PC-3 (cell line): ENCODE measurements at regions of chrX and their contacts with region 1.

Region 1: GRCh38 chrX:107537815-107538214 is 88.4 kb downstream of the FRMPD3 start:
- DNase-seq: peak; percentile 68
- ATAC-seq: peak; percentile 76
- H3K4me3 ChIP-seq: no peak overlapping the region
- H3K27ac ChIP-seq: no peak overlapping the region
- H3K4me1 ChIP-seq: no peaks in the 10 kb centered on the region
- H3K27me3 ChIP-seq: no peaks in the 10 kb centered on the region
- CTCF ChIP-seq: peak; percentile 77

Region 2: GRCh38 chrX:107025545-107025944 is 512.3 kb before region 1 on chrX:
- CTCF ChIA-PET with region 1: interaction called, 12 read pairs
- POLR2A ChIA-PET with region 1: no interaction called
- intact Hi-C with region 1: no loop called
- DNase-seq: peak; percentile 56
- ATAC-seq: peak; percentile 69
- H3K4me3 ChIP-seq: no peak overlapping the region
- H3K27ac ChIP-seq: no peak overlapping the region
- H3K4me1 ChIP-seq: no peaks in the 10 kb centered on the region
- H3K27me3 ChIP-seq: no peaks in the 10 kb centered on the region
- CTCF ChIP-seq: peak; percentile 81

Region 3: DNA sequence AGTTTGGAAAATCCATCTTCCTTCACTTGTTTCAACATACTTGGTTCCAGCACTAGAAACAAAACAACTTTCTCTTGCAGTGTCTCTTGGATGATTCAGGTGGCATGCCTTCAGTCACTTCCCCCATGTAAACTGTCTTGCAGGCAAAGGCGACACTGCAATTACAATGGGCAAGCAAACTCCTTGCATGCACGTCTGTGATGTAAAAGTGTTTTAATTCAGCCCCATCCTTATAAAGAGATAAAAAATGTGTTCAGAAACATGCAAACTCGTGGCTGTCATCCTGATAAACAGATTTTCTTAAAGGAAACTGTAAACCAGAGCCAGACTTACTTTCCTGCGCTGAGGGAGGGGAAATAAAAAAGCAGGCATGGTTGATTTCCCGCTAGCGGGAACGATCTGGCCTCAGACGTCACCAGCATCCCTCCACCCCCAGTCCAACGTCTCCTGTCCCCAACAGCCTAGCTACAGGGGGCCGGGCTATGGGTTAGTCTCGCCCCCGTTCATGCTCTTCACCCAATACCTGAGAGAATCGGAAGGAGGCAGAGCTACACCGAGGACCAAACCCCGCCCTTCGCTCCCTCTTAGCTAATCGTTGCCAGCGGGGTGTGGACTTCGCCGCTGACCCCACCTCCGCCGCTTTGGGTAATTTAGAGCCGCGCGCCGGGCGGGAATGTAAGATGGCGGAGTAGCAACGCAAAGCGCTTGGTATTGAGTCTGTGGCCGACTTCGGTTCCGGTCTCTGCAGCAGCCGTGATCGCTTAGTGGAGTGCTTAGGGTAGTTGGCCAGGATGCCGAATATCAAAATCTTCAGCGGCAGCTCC is 90.2 kb after region 1 on chrX and contains the start of gene PRPS1:
- CTCF ChIA-PET with region 1: interaction called, 5 read pairs
- POLR2A ChIA-PET with region 1: interaction called, 4 read pairs
- intact Hi-C with region 1: loop called (anchors 1 kb)
- DNase-seq: peak; percentile 96
- ATAC-seq: peak; percentile 94
- H3K4me3 ChIP-seq: peak within 1 kb of the TSS; percentile 89
- H3K27ac ChIP-seq: peak within 1 kb of the TSS; percentile 82
- H3K4me1 ChIP-seq: peaks cover 37% of the 10 kb centered on the region
- H3K27me3 ChIP-seq: no peaks in the 10 kb centered on the region
- CTCF ChIP-seq: no peak
- total RNA-seq, gene PRPS1: 57.0 and 70.8 TPM in 2 replicates

Region 4: GRCh38 chrX:107669261-107669660 is 131.4 kb after region 1 on chrX:
- CTCF ChIA-PET with region 1: no interaction called
- POLR2A ChIA-PET with region 1: no interaction called
- intact Hi-C with region 1: no loop called
- DNase-seq: no peak
- ATAC-seq: no peak
- H3K4me3 ChIP-seq: no peak overlapping the region
- H3K27ac ChIP-seq: no peak overlapping the region
- H3K4me1 ChIP-seq: peaks cover 13% of the 10 kb centered on the region
- H3K27me3 ChIP-seq: no peaks in the 10 kb centered on the region
- CTCF ChIP-seq: no peak

Region 5: DNA sequence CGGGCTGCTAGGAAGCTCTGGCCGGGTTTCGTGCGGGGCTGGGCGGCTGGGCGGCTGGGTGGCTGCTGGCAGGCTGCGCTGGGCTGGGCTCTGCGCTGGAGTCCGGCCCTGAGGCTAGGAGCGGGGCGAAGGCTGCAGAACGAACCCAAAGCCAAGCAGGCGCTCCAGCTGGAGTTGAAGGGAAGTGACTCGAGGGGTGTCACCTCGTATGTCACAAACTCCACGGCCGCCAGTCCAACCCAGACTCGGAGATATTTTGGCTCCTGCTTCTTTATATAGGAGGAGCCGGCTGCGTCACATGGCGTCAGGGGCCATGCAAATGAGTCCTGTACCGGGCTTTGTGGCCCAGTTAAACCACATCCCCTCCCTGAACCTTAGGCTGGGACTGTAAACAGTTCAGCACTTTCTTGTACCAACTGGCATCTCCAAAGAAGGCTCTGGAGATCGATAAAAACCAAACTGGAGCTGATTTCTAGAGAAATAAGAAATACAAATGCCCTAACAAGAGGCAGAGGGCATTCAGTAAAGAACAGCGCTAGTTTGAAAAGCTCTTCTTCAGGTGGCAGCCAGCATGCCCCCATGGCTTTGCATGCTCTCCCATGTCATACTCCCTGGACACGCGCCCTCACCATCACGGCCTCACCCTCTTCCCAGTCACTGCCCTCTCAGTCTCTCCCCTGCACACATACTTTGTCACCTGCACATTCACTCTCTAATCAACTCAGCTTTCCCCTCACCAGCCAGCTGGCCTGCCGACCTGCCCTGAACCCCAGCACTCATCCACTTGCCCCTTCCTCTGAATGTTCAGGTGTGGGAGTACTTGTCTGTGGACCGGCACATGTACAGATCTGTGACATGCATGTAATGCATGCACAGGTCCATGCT is 179.2 kb after region 1 on chrX:
- CTCF ChIA-PET with region 1: no interaction called
- POLR2A ChIA-PET with region 1: no interaction called
- intact Hi-C with region 1: loop called (anchors 2 kb)
- DNase-seq: peak; percentile 69
- ATAC-seq: peak; percentile 64
- H3K4me3 ChIP-seq: peak overlapping the region; percentile 92
- H3K27ac ChIP-seq: peak overlapping the region; percentile 25; the same call in 1 of the 2 replicates
- H3K4me1 ChIP-seq: peaks cover 19% of the 10 kb centered on the region
- H3K27me3 ChIP-seq: no peaks in the 10 kb centered on the region
- CTCF ChIP-seq: no peak